ENCODE measurements at regions of chr1 and their contacts with region 1.

Region 1: DNA sequence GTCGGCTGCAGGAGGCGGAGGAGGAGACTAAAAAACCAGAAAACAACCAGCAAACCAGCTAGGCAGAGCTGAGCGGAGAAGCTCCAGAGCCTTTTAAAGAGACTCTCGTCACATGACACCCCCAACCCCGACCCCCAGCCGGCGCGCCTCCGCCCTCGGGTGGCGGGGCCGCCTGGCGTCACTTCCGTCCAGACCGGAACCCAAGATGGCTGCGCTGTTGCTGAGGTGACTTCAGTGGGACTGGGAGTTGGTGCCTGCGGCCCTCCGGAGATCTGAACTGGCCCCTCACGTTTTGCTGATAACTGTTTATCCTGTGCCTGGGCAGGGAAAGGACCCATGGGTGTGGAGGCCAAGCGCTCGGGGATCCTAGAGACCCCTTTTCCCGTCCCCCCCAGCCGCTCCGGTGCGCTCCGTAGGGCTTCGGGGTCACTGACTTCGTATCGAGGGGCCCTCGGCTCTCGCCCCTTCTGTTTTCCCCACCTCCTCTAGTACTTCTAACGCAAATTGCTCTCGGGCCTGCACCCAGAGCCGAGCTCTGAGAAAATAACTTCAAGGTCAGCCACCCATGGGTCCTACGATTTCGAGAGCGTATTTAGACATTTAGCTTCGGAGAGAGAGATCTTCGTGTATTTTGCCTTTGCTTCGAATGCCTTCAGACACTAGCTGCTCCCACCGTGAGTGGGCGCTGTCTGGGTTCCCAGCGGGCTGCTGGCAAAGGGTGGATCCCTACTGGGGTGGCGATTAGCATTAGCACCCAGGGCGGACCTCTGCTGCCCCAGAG is at the start of gene SDHC:
- DNase-seq: peak; percentile 93 to 95 (median 94)
- ATAC-seq: peak; percentile 96
- H3K4me3 ChIP-seq: peak within 1 kb of the TSS; percentile 91
- H3K27ac ChIP-seq: peak within 1 kb of the TSS; percentile 98
- H3K4me1 ChIP-seq: peaks cover 13 to 30% of the 10 kb centered on the region in 2 experiments
- H3K27me3 ChIP-seq: no peaks in the 10 kb centered on the region
- CTCF ChIP-seq: peak; percentile 70 to 82 (median 72)
- EP300 ChIP-seq: peak; percentile 51; the same call in 1 of the 2 replicates
- POLR2A ChIP-seq: peak; percentile 97
- RAD21 ChIP-seq: no peak
- polyA plus RNA-seq, gene SDHC: 99.8 to 198 TPM

Region 2: GRCh38 chr1:161117759-161118581 is 196.4 kb before region 1 on chr1 and contains the starts of genes NIT1 and PFDN2:
- CTCF ChIA-PET with region 1: no interaction called
- POLR2A ChIA-PET with region 1: no interaction called
- in situ Hi-C with region 1: no loop called
- intact Hi-C with region 1: no loop called
- DNase-seq: peak; percentile 85 to 93 (median 88)
- ATAC-seq: peak; percentile 83
- H3K4me3 ChIP-seq: peak within 1 kb of the TSS; percentile 81
- H3K27ac ChIP-seq: peak within 1 kb of the TSS; percentile 95
- H3K4me1 ChIP-seq: peaks cover 28 to 44% of the 10 kb centered on the region in 2 experiments
- H3K27me3 ChIP-seq: no peaks in the 10 kb centered on the region; a peak in 1 of 5 replicates
- CTCF ChIP-seq: 0 out of 6 replicates have a peak, but pooled peaks of 1 of the 3 experiments have one; percentile 17
- EP300 ChIP-seq: no peak
- POLR2A ChIP-seq: peak; percentile 94
- RAD21 ChIP-seq: no peak
- polyA plus RNA-seq, gene NIT1: 69.8 to 76.0 TPM
- polyA plus RNA-seq, gene PFDN2: 50.2 to 77.1 TPM

Region 3: GRCh38 chr1:161298116-161298515 is 16.3 kb before region 1 on chr1:
- CTCF ChIA-PET with region 1: no interaction called
- POLR2A ChIA-PET with region 1: interaction called, 13 read pairs
- in situ Hi-C with region 1: no loop called
- intact Hi-C with region 1: no loop called
- DNase-seq: no peak
- ATAC-seq: no peak
- H3K4me3 ChIP-seq: no peak overlapping the region
- H3K27ac ChIP-seq: no peak overlapping the region
- H3K4me1 ChIP-seq: peaks cover 0 to 5% of the 10 kb centered on the region in 2 experiments; a peak in 1 of 5 replicates
- H3K27me3 ChIP-seq: no peaks in the 10 kb centered on the region
- CTCF ChIP-seq: no peak
- EP300 ChIP-seq: no peak
- POLR2A ChIP-seq: no peak
- RAD21 ChIP-seq: no peak

Region 4: GRCh38 chr1:161330346-161330745 is 16.0 kb after region 1 on chr1:
- CTCF ChIA-PET with region 1: no interaction called
- POLR2A ChIA-PET with region 1: interaction called, 10 read pairs
- in situ Hi-C with region 1: no loop called
- intact Hi-C with region 1: no loop called
- DNase-seq: no peak
- ATAC-seq: no peak
- H3K4me3 ChIP-seq: no peak overlapping the region
- H3K27ac ChIP-seq: no peak overlapping the region; the same call in 2 of the 3 replicates
- H3K4me1 ChIP-seq: no peaks in the 10 kb centered on the region
- H3K27me3 ChIP-seq: no peaks in the 10 kb centered on the region
- CTCF ChIP-seq: no peak
- EP300 ChIP-seq: no peak
- POLR2A ChIP-seq: no peak
- RAD21 ChIP-seq: no peak

Region 5: DNA sequence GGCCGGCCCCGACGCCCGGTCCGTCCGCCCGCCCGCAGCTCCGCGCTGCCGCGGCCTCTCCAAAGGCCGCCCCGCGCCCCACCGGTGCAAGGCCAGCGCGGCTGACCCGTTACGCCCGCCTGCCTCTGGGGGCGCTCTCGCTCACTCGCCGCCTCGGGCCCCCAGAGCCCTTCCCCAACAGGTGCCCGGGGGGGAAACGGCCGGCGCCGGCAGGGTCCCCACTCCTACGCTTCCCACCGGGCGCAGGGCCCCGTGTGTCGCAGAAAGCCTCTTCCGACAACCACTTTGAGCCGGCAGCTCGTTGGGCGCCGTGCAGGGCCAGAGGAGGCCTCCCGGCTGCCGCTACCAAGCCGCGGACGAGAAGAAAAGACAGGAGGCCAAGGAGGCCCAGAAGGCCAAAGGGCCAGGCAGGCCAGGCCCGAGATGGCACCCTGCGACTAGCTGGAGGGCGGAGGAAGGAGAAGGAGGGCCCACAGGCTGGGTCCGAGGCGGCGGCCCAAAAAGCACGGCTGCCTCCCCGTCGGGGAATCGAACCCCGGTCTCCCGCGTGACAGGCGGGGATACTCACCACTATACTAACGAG is 126.0 kb after region 1 on chr1:
- CTCF ChIA-PET with region 1: no interaction called
- POLR2A ChIA-PET with region 1: no interaction called
- in situ Hi-C with region 1: no loop called
- intact Hi-C with region 1: loop called (anchors 10 kb)
- DNase-seq: peak; percentile 82 to 89 (median 86)
- ATAC-seq: peak; percentile 79
- H3K4me3 ChIP-seq: peak overlapping the region; percentile 89
- H3K27ac ChIP-seq: peak overlapping the region; percentile 90
- H3K4me1 ChIP-seq: peaks cover 5 to 18% of the 10 kb centered on the region in 2 experiments; a peak in 4 of 5 replicates
- H3K27me3 ChIP-seq: no peaks in the 10 kb centered on the region
- CTCF ChIP-seq: peak; percentile 72 to 88 (median 75)
- EP300 ChIP-seq: no peak
- POLR2A ChIP-seq: peak; percentile 51; the same call in 1 of the 2 replicates
- RAD21 ChIP-seq: peak; percentile 8 to 36; a peak in 2 of 4 replicates